AG04450 (cell line): ENCODE measurements at regions of chr17 and their contacts with region 1.

Region 1: GRCh38 chr17:42577532-42578281 is at the start of gene PSMC3IP:
- DNase-seq: peak; percentile 78
- H3K4me3 ChIP-seq: peak within 1 kb of the TSS; percentile 90
- H3K27ac ChIP-seq: peak within 1 kb of the TSS; percentile 73
- H3K27me3 ChIP-seq: no peaks in the 10 kb centered on the region
- CTCF ChIP-seq: peak; percentile 46
- polyA plus RNA-seq, gene PSMC3IP: 3.0 and 5.1 TPM in 2 replicates

Region 2: DNA sequence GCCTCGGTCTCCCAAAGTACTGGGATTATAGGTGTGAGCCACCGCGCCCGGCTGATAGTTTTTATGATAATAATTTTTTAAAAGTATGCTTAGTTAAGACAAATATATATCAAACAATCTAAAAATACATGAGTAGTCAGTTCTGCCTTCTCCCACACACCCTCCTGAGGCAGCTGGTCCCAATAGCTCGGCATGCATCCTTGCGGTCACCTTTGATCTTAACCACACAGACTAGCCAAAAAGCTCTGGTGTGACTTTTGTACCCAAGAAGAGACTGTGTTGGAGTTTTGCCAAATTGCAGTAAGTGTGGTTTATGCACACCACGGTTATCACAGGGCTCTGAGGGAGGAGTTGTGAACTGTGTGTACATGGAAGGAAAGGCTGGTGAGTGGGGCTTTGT is 93.4 kb before region 1 on chr17:
- CTCF ChIA-PET with region 1: no interaction called
- POLR2A ChIA-PET with region 1: no interaction called
- DNase-seq: no peak
- H3K4me3 ChIP-seq: no peak overlapping the region
- H3K27ac ChIP-seq: no peak overlapping the region
- H3K27me3 ChIP-seq: no peaks in the 10 kb centered on the region
- CTCF ChIP-seq: no peak

Region 3: DNA sequence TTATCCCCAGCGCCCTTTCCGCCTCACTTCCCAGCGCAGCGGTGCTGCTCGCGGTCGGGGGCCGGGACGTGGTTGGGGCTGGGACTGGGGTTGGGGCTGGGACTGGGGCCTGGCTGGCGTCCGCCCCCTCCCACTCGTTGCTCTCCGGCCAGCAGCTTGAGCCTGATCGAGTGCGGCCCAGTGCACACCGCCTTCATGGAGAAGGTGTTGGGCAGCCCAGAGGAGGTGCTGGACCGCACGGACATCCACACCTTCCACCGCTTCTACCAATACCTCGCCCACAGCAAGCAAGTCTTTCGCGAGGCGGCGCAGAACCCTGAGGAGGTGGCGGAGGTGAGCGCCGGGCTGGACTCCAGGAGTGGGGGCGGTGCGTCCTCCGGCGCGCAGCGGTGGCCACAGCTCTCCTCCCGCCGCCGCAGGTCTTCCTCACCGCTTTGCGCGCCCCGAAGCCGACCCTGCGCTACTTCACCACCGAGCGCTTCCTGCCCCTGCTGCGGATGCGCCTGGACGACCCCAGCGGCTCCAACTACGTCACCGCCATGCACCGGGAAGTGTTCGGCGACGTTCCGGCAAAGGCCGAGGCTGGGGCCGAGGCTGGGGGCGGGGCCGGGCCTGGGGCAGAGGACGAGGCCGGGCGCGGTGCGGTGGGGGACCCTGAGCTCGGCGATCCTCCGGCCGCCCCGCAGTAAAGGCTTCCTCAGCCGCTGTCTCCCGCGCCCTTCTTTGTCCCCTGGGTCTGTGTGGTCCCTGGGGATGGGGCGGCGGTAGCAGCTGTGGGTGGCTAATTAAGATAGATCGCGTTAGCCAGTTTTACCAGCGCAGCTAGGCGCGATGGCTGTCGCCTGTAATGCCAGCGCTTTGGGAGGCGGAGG is 23.2 kb before region 1 on chr17:
- CTCF ChIA-PET with region 1: no interaction called
- POLR2A ChIA-PET with region 1: no interaction called
- DNase-seq: no peak
- H3K4me3 ChIP-seq: peak overlapping the region; percentile 90
- H3K27ac ChIP-seq: peak overlapping the region; percentile 57
- H3K27me3 ChIP-seq: no peaks in the 10 kb centered on the region
- CTCF ChIP-seq: no peak

Region 4: GRCh38 chr17:42598905-42599304 is 21.2 kb after region 1 on chr17:
- CTCF ChIA-PET with region 1: interaction called, 10 read pairs
- POLR2A ChIA-PET with region 1: no interaction called
- DNase-seq: no peak
- H3K4me3 ChIP-seq: no peak overlapping the region
- H3K27ac ChIP-seq: no peak overlapping the region
- H3K27me3 ChIP-seq: no peaks in the 10 kb centered on the region
- CTCF ChIP-seq: no peak

Region 5: GRCh38 chr17:42677008-42677857 is 99.5 kb after region 1 on chr17:
- CTCF ChIA-PET with region 1: interaction called, 30 read pairs
- POLR2A ChIA-PET with region 1: interaction called, 6 read pairs
- DNase-seq: peak; percentile 99
- H3K4me3 ChIP-seq: peak overlapping the region; percentile 89
- H3K27ac ChIP-seq: peak overlapping the region; percentile 84
- H3K27me3 ChIP-seq: no peaks in the 10 kb centered on the region
- CTCF ChIP-seq: no peak